GM10248 (cell line): ENCODE measurements at regions of chr5 and their contacts with region 1.

Region 1: DNA sequence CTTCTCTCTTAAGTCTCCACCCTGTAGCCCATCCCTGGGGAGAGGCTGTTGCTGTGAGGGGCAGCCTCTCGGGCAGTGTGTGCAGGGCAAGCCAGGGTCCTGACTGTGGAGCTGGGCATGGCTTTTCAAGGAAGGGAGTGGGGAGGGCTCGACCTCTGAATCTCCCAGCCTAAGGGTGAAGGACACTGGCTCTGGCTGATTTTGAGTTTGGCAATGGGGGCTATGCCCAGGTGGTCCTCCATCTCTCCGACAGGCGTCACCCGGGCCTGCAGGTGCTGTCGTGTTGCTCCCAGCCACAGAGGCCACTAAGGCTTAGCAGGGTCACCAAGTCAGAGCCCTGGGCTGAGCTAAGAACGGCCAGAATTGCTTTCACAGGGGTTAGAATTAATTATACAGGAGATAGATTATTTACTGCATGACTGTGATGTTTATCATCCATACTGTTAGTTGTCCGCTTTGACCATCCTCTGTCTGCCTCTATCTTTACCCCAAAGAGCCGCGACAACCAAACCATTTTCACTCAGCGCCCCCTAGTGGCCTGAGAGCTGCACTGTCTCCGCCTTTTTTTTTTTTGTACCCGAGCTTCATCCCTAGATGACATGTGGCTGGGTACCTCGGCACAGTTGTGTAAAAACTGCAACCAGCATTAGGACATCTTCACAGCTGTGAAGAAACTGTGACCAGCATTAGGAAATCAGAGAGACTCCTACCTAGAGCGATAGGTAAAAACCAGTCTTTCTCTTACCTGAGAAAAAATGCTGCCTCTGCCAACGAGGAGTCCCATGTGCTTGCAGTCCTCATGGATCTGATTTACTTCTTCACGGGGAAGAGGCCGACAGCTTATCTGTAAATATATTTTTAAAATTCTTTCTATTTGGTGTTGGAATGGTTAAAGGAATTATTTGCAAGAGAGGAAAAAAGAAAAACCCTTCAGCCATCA is 44.5 kb downstream of the AGXT2 start:
- DNase-seq: peak; percentile 79
- CTCF ChIP-seq: peak; percentile 72

Region 2: GRCh38 chr5:34522599-34523386 is 480.5 kb before region 1 on chr5:
- CTCF ChIA-PET with region 1: interaction called, 14 read pairs
- POLR2A ChIA-PET with region 1: no interaction called
- DNase-seq: peak; percentile 72
- CTCF ChIP-seq: peak; percentile 69

Region 3: GRCh38 chr5:34957857-34958690 is 45.2 kb before region 1 on chr5:
- CTCF ChIA-PET with region 1: interaction called, 28 read pairs
- POLR2A ChIA-PET with region 1: no interaction called
- DNase-seq: peak; percentile 54
- CTCF ChIP-seq: peak; percentile 60

Region 4: GRCh38 chr5:34991486-34992238 is 11.6 kb before region 1 on chr5:
- CTCF ChIA-PET with region 1: interaction called, 21 read pairs
- POLR2A ChIA-PET with region 1: no interaction called
- DNase-seq: no peak
- CTCF ChIP-seq: no peak

Region 5: GRCh38 chr5:35029333-35029732 is 26.0 kb after region 1 on chr5:
- CTCF ChIA-PET with region 1: interaction called, 11 read pairs
- POLR2A ChIA-PET with region 1: no interaction called
- DNase-seq: no peak
- CTCF ChIP-seq: no peak

Region 6: DNA sequence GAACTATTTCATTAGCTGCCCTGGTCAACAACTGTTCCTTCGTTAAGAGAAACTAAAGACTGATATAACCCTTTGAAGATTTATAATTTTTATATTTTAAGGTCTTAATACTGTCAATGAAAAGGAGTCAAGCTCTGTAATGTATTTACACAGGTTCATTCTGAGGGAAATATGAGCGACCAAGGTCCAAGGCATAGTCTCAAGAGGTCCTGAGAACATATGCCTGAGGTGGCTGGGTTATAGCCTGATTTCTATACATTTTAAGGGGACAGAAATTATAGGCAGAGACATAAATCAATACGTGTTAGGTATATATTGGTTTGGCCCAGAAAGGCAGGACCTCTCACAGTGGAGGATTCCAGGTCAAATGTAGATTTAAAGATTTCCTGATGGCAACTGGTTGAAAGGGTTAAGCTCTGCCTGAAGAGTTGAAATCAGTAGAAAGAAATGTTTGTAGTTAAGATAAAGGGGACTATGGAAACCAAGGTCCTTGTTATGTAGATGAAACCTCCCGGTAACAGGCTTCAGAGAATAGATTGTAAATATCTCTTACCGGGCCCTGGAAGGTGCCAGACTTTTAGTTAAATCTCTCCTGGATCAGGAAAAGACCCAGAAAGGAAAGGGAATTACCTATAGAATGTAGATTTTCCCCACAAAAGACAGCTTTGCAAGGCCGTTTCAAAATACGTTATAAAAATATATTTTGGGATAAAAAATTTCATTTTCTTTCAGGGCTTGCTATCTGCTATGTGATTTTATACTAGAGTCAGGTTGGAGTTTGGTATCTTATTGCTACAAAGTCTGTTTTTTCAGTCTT is 334.3 kb after region 1 on chr5:
- CTCF ChIA-PET with region 1: no interaction called
- POLR2A ChIA-PET with region 1: no interaction called
- DNase-seq: no peak
- CTCF ChIP-seq: no peak